Posterior vena cava (tissue), 2 donors: ENCODE measurements at regions of chr9 and their contacts with region 1.

Region 1: GRCh38 chr9:132061526-132061925 is 18.1 kb downstream of the MED27 start:
- DNase-seq: no peak

Region 2: GRCh38 chr9:132090771-132091170 is 29.2 kb after region 1 on chr9:
- intact Hi-C with region 1: loop called in 1 of 2 experiments (anchors 1 kb)
- DNase-seq: no peak